ENCODE measurements at regions of chr12 and their contacts with region 1.

Region 1: GRCh38 chr12:15910864-15911721 is at the start of gene DERA:
- DNase-seq: peak; percentile 85
- H3K4me3 ChIP-seq: peak within 1 kb of the TSS; percentile 80 to 96 (median 90)
- H3K27ac ChIP-seq: peak within 1 kb of the TSS; percentile 98
- H3K4me1 ChIP-seq: peaks cover 17% of the 10 kb centered on the region
- H3K27me3 ChIP-seq: no peaks in the 10 kb centered on the region
- CTCF ChIP-seq: no peak
- POLR2A ChIP-seq: peak; percentile 94
- total RNA-seq, gene DERA: 41.5 and 42.1 TPM in 2 replicates

Region 2: DNA sequence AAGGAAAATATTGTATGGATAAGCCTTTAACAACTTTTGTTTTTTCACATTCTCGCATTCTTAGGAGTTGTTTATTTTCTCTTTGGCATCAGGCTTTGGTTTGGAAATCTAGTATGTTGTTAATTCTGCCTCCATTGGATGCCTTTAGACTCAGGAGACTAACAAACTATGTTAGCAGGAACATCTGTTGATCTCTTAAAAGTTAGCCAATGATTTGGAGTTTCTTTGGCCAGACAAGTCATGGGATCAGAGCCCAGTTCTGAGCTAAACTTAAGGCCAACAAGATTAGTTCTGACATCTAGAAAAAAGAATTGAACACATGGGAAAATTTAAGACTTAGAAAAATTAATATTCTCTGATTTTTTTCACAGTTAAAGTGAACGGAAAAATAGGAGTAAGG is 64.2 kb before region 1 on chr12:
- CTCF ChIA-PET with region 1: no interaction called
- POLR2A ChIA-PET with region 1: no interaction called
- dilution Hi-C with region 1: no loop called
- intact Hi-C with region 1: no loop called
- DNase-seq: no peak
- H3K4me3 ChIP-seq: no peak overlapping the region
- H3K27ac ChIP-seq: no peak overlapping the region
- H3K4me1 ChIP-seq: no peaks in the 10 kb centered on the region
- H3K27me3 ChIP-seq: no peaks in the 10 kb centered on the region
- CTCF ChIP-seq: no peak
- POLR2A ChIP-seq: no peak

Region 3: DNA sequence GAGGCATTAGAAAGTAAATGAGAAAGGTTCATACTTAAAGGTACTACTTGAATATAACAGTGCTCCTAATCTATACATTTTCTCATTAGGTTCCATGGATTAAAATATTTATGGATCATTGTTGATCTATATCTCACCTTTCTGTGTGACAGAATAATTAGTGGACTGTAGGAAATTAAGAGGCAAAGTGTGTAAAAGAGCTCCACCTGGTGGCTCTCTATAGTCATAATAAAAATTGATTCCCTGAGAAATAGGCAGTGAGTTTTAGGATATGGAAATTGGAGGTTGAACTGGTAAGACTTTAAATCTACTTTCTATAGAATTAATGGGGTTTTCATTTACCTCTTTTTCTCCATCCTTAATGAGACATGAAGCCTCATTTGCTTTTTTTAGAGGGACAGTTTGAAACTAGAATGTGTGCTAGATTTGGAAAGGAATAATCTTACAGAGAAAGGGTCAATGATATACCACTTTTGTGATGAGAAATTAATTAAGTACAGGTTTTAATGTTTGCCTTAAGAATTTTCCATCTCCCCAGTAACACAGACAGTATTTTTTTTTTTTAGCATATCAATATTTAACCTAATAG is 11.7 kb before region 1 on chr12:
- CTCF ChIA-PET with region 1: interaction called, 65 read pairs
- POLR2A ChIA-PET with region 1: no interaction called
- dilution Hi-C with region 1: no loop called
- intact Hi-C with region 1: no loop called
- DNase-seq: peak; percentile 54
- H3K4me3 ChIP-seq: no peak overlapping the region
- H3K27ac ChIP-seq: no peak overlapping the region
- H3K4me1 ChIP-seq: peaks cover 3% of the 10 kb centered on the region
- H3K27me3 ChIP-seq: no peaks in the 10 kb centered on the region
- CTCF ChIP-seq: peak; percentile 44 to 45
- POLR2A ChIP-seq: no peak

Region 4: DNA sequence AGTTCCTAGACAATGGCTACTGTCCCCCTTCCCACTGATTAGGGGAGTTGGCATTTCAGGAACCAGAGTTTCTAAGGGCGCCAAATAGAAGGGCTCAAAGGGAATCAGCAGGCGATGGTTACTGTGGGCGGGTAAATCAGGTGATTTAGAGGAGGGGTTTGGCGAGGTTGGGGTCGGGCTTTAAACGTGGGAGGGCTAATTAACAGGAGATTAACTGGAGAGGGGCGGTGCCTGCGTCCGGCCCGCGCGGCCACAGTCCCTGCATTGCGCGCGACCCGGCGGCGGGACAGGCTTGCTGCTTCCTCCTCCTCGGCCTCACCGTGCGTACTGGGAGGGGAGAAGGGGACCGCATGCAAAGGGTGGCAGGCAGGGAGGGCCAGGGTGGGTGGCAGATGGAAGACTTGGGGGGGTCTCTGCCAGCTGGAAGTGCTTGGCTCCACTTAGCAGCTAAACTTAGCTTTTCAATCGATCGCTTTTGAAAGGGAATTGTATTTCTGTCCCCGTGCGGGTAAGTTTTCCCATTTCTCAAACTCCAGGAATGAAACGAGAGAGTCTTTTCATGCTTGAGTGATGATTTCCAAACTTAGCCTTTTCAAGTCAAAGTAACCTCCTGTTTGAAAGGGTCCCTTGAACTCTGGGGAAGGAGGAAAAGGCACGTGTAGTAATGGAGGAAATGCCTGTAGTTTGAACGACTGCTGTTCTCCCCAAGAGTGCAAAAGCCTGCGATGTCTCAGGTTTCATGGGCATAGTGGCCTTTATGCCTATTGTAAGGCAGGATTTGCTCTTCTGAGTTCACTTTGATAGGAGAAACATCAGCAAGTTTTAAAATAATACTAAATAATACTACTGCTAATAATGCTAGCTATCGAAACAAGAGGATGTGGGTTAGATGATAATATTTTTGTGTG is 436.6 kb after region 1 on chr12 and contains the start of gene MGST1:
- CTCF ChIA-PET with region 1: no interaction called
- POLR2A ChIA-PET with region 1: no interaction called
- dilution Hi-C with region 1: no loop called
- intact Hi-C with region 1: loop called (anchors 10 kb)
- DNase-seq: peak; percentile 67
- H3K4me3 ChIP-seq: peak within 1 kb of the TSS; percentile 86 to 95 (median 87)
- H3K27ac ChIP-seq: peak within 1 kb of the TSS; percentile 70
- H3K4me1 ChIP-seq: peaks cover 27% of the 10 kb centered on the region
- H3K27me3 ChIP-seq: no peaks in the 10 kb centered on the region
- CTCF ChIP-seq: no peak
- POLR2A ChIP-seq: peak; percentile 78
- total RNA-seq, gene MGST1: 170 and 173 TPM in 2 replicates